ENCODE measurements at regions of chr19 and their contacts with region 1.

Region 1: DNA sequence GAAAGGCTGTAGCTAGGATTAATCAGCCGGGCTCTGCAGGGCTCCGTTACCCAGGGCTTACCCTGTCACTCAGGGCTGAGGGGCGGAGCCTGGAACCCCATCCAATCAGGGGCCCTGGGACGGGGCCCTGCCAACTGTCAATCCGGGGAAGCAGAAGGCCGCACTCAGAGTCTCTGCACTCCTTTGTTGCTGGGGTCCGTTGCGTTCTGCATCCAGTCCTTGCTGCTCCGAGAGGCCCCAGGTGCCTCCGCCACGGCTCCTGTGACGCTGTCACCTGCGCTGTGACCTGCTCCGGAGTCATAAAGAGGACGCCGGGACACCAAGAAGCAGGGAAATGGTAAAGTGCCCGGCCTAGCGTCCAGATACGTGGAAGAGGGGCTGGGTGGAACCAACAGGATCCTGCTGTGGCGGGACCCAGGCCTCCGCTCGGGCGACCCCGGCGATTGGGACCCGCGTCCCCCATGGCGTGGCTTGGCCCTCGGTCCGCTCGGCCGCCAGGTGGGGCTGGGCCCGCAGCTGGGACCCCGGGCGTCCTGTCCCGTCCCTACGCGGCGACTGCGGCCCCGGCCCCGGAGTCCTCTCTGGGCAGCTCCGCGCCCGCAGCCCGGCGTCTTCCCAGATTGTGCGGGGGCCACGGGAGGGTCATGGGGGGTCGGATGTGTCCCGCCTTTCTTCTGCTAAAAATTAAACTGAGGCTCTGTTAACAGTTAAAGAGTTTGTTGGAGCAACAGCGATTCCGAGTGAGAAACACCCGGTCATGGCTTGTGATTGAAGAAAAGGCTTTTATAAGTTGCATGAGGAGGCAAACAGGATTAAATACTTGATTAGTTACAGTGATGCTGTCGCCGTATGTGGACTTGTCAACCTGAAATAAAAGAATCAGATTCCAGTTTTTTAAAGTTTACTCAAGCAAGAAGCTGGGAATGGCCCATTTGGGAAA is at the start of gene ZNF491:
- DNase-seq: peak; percentile 42
- ATAC-seq: peak; percentile 99
- H3K4me3 ChIP-seq: peak within 1 kb of the TSS; percentile 69 to 75
- H3K27ac ChIP-seq: peak within 1 kb of the TSS; percentile 63
- H3K4me1 ChIP-seq: peaks cover 8% of the 10 kb centered on the region
- H3K27me3 ChIP-seq: no peaks in the 10 kb centered on the region
- CTCF ChIP-seq: peak; percentile 53
- total RNA-seq, gene ZNF491: 0.98 TPM

Region 2: GRCh38 chr19:11738746-11739620 is 59.7 kb before region 1 on chr19 and contains the start of gene ZNF823:
- CTCF ChIA-PET with region 1: no interaction called
- POLR2A ChIA-PET with region 1: interaction called, 11 read pairs
- in situ Hi-C with region 1: no loop called
- intact Hi-C with region 1: no loop called
- DNase-seq: peak; percentile 84
- ATAC-seq: peak; percentile 99
- H3K4me3 ChIP-seq: peak within 1 kb of the TSS; percentile 83 to 84
- H3K27ac ChIP-seq: peak within 1 kb of the TSS; percentile 95
- H3K4me1 ChIP-seq: peaks cover 7% of the 10 kb centered on the region
- H3K27me3 ChIP-seq: no peaks in the 10 kb centered on the region
- CTCF ChIP-seq: no peak
- total RNA-seq, gene ZNF823: 5.0 TPM

Region 3: DNA sequence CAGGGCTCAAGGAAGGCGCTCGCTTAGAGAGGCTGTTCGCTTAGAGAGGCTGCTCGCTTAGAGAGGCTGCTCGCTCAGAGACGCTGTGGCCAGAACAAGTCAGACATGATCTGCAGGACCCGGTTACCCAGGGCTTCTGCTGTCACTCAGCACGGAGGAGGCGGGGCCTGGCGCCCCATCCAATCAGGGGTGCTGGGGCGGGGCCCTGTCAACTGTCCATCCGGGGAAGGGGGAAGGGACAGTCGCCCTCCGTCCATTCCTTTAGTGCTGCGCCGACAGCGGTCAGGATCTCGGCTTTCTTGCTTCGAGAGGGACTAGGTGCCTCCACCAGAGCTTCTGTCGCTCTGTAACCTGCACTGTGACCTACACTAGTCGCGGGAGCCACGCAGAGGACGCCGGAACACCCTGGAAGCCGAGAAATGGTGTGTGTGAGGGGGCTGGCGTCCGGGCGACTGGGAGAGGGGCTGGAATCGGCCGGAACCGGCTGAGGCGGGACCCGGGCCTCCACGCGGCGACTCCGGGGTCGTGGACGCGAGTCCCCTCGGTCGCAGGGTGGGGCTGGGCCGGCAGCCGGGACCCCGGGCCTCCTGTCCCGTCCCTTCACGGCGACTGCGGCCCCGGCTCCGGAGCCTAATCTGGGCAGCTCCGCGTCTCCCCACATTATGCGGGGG is 15.5 kb after region 1 on chr19 and contains the start of gene ZNF440:
- CTCF ChIA-PET with region 1: interaction called, 17 read pairs
- POLR2A ChIA-PET with region 1: no interaction called
- in situ Hi-C with region 1: no loop called
- intact Hi-C with region 1: no loop called
- DNase-seq: peak; percentile 52
- ATAC-seq: peak; percentile 100
- H3K4me3 ChIP-seq: peak within 1 kb of the TSS; percentile 82 to 86
- H3K27ac ChIP-seq: peak within 1 kb of the TSS; percentile 83
- H3K4me1 ChIP-seq: 0 out of 2 replicates have a peak, but pooled peaks cover 3% of the 10 kb centered on the region
- H3K27me3 ChIP-seq: no peaks in the 10 kb centered on the region
- CTCF ChIP-seq: no peak
- total RNA-seq, gene ZNF440: 12.9 TPM

Region 4: GRCh38 chr19:11987405-11988281 is 189.0 kb after region 1 on chr19:
- CTCF ChIA-PET with region 1: interaction called, 4 read pairs
- POLR2A ChIA-PET with region 1: no interaction called
- in situ Hi-C with region 1: no loop called
- intact Hi-C with region 1: loop called (anchors 5 kb)
- DNase-seq: no peak
- ATAC-seq: peak; percentile 99
- H3K4me3 ChIP-seq: peak overlapping the region; percentile 89 to 90
- H3K27ac ChIP-seq: peak overlapping the region; percentile 87
- H3K4me1 ChIP-seq: no peaks in the 10 kb centered on the region
- H3K27me3 ChIP-seq: no peaks in the 10 kb centered on the region
- CTCF ChIP-seq: no peak

Region 5: GRCh38 chr19:12465211-12465610 is 666.5 kb after region 1 on chr19:
- CTCF ChIA-PET with region 1: no interaction called
- POLR2A ChIA-PET with region 1: no interaction called
- in situ Hi-C with region 1: no loop called
- intact Hi-C with region 1: no loop called
- DNase-seq: no peak
- ATAC-seq: no peak
- H3K4me3 ChIP-seq: no peak overlapping the region
- H3K27ac ChIP-seq: no peak overlapping the region
- H3K4me1 ChIP-seq: no peaks in the 10 kb centered on the region
- H3K27me3 ChIP-seq: no peaks in the 10 kb centered on the region
- CTCF ChIP-seq: no peak

Measured in Panc1 (cell line).